Naive thymus-derived CD4-positive, alpha-beta T cell (primary cell): ENCODE measurements at regions of chr1 and their contacts with region 1.

Region 1: DNA sequence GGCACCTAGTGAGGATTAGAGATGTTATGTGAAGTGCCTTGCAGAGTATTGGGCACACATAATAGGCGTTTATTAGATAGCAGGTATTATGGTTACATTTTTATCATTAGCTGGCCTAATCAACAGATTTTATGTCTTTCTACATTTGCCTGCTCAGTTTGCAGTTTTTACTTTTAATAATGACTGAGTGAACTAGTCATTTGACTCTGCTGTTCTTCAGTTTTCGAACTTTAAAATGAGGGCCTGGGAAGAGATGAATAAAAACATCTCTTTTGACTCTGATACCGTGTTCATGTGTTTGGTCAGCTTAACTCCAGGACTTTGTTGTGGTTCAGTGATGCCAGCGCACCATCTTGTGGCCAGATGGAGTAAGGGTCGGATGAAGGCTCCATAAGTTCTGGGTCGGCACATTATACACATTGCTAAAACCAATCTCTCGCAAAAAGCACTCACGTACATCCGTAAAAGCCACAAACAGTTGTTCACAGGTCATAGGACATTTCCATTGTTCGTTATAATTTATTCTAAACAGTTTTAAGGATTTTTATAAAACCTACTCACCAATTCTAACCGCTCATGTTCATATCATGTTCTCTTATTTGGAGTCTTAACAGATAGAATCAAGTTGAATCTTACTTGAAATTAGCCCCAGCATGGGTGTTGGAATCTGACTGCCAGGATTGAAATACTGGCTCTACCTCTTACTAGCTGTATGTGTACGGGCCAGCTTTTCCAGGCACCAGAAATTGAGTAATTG is 78.4 kb upstream of the GPR88 start:
- DNase-seq: peak; percentile 34 to 62 (median 53)
- ATAC-seq: peak; percentile 87
- H3K4me3 ChIP-seq: no peak overlapping the region
- H3K4me3 Mint-ChIP-seq: peak overlapping the region in 8 of 10 donors; percentile 15 to 65 (median 40)
- H3K27ac ChIP-seq: no peak overlapping the region
- H3K27ac Mint-ChIP-seq: peak overlapping the region; percentile 11 to 93 (median 74)
- H3K4me1 ChIP-seq: peaks cover 18 to 22% of the 10 kb centered on the region in 2 donors
- H3K4me1 Mint-ChIP-seq: peaks cover 21 to 81% (median 59%) of the 10 kb centered on the region in 7 donors
- H3K27me3 ChIP-seq: no peaks in the 10 kb centered on the region
- H3K27me3 Mint-ChIP-seq: no peaks in the 10 kb centered on the region

Region 2: DNA sequence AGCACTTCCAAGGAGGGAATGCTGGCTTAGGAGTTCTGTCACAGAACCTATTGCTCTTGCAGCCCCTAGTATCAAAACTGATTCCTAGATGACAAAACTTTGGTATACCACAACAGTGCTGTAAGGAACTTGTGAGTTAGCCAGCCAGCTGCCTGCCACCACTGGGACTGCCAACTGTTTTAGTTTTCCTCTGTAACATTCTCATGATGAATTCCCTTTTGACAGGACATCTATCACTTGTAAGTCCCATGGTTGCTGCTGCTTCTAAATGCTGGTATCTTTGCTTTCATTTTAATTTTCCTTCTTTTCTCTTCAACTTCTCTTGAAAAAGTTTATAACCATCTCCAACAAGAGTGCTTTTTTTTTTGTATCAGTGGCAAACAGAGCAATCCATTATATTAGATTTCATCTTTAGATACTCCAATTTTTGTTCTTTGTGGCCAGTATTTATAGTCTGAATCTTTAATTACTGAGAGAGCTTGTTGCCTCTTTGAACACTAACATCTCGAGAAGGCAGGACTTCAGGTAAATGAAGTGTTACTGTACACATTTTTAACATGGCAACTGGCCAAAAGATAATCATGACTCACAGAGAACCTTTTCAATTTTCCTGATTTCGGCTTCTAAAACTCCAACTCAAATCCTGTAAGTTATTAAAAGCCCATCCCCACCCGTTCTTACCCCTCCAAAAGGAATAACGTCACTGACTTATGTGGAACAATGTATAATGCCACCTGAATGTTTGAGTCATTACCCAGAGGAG is 229.7 kb before region 1 on chr1:
- CTCF ChIA-PET with region 1: interaction called, 5 read pairs
- POLR2A ChIA-PET with region 1: interaction called, 3 read pairs
- intact Hi-C with region 1: loop called in 1 of 2 experiments (anchors 5 kb)
- DNase-seq: no peak
- ATAC-seq: no peak
- H3K4me3 ChIP-seq: no peak overlapping the region
- H3K4me3 Mint-ChIP-seq: no peak overlapping the region
- H3K27ac ChIP-seq: no peak overlapping the region
- H3K27ac Mint-ChIP-seq: no peak overlapping the region
- H3K4me1 ChIP-seq: no peaks in the 10 kb centered on the region
- H3K4me1 Mint-ChIP-seq: peaks cover 0 to 5% (median 0%) of the 10 kb centered on the region in 7 donors
- H3K27me3 ChIP-seq: no peaks in the 10 kb centered on the region
- H3K27me3 Mint-ChIP-seq: no peaks in the 10 kb centered on the region

Region 3: GRCh38 chr1:100277866-100278265 is 181.7 kb before region 1 on chr1:
- CTCF ChIA-PET with region 1: interaction called, 18 read pairs
- POLR2A ChIA-PET with region 1: no interaction called
- intact Hi-C with region 1: loop called in 1 of 2 experiments (anchors 1 kb)
- DNase-seq: peak in 6 of 9 donors; percentile 5 to 42 (median 28)
- ATAC-seq: peak; percentile 75
- H3K4me3 ChIP-seq: no peak overlapping the region
- H3K4me3 Mint-ChIP-seq: no peak overlapping the region
- H3K27ac ChIP-seq: no peak overlapping the region
- H3K27ac Mint-ChIP-seq: peak overlapping the region in 3 of 9 donors; percentile 9 to 37 (median 27)
- H3K4me1 ChIP-seq: no peaks in the 10 kb centered on the region
- H3K4me1 Mint-ChIP-seq: peaks cover 9 to 50% (median 34%) of the 10 kb centered on the region in 7 donors
- H3K27me3 ChIP-seq: no peaks in the 10 kb centered on the region
- H3K27me3 Mint-ChIP-seq: no peaks in the 10 kb centered on the region

Region 4: GRCh38 chr1:100400404-100400803 is 59.1 kb before region 1 on chr1:
- CTCF ChIA-PET with region 1: interaction called, 4 read pairs
- POLR2A ChIA-PET with region 1: interaction called, 7 read pairs
- intact Hi-C with region 1: loop called in 1 of 2 experiments (anchors 1 kb)
- DNase-seq: peak in 8 of 9 donors; percentile 23 to 89 (median 84)
- ATAC-seq: peak; percentile 87
- H3K4me3 ChIP-seq: peak overlapping the region; percentile 46
- H3K4me3 Mint-ChIP-seq: peak overlapping the region; percentile 69 to 89 (median 81)
- H3K27ac ChIP-seq: peak overlapping the region; percentile 72
- H3K27ac Mint-ChIP-seq: peak overlapping the region; percentile 83 to 98 (median 96)
- H3K4me1 ChIP-seq: peaks cover 77 to 87% of the 10 kb centered on the region in 2 donors
- H3K4me1 Mint-ChIP-seq: peaks cover 59 to 98% (median 86%) of the 10 kb centered on the region in 7 donors
- H3K27me3 ChIP-seq: no peaks in the 10 kb centered on the region
- H3K27me3 Mint-ChIP-seq: no peaks in the 10 kb centered on the region

Region 5: GRCh38 chr1:100543640-100544039 is 84.1 kb after region 1 on chr1:
- CTCF ChIA-PET with region 1: no interaction called
- POLR2A ChIA-PET with region 1: no interaction called
- intact Hi-C with region 1: loop called in 1 of 2 experiments (anchors 5 kb)
- DNase-seq: peak in 5 of 9 donors; percentile 17 to 39 (median 25)
- ATAC-seq: peak; percentile 76
- H3K4me3 ChIP-seq: no peak overlapping the region
- H3K4me3 Mint-ChIP-seq: no peak overlapping the region
- H3K27ac ChIP-seq: no peak overlapping the region
- H3K27ac Mint-ChIP-seq: no peak overlapping the region
- H3K4me1 ChIP-seq: peaks cover 4% of the 10 kb centered on the region in 2 donors
- H3K4me1 Mint-ChIP-seq: peaks cover 0 to 12% (median 7%) of the 10 kb centered on the region in 7 donors
- H3K27me3 ChIP-seq: peaks cover 4 to 7% of the 10 kb centered on the region in 2 donors
- H3K27me3 Mint-ChIP-seq: peaks cover 23 to 54% (median 30%) of the 10 kb centered on the region in 5 donors

Region 6: GRCh38 chr1:100613817-100614559 is 154.5 kb after region 1 on chr1:
- CTCF ChIA-PET with region 1: no interaction called
- POLR2A ChIA-PET with region 1: no interaction called
- intact Hi-C with region 1: no loop called
- DNase-seq: peak in 5 of 9 donors; percentile 10 to 42 (median 21)
- ATAC-seq: peak; percentile 56
- H3K4me3 ChIP-seq: peak overlapping the region; percentile 2
- H3K4me3 Mint-ChIP-seq: peak overlapping the region in 4 of 10 donors; percentile 24 to 68 (median 46)
- H3K27ac ChIP-seq: no peak overlapping the region
- H3K27ac Mint-ChIP-seq: peak overlapping the region in 1 of 9 donors; percentile 63
- H3K4me1 ChIP-seq: peaks cover 4 to 7% of the 10 kb centered on the region in 2 donors
- H3K4me1 Mint-ChIP-seq: peaks cover 9 to 23% (median 21%) of the 10 kb centered on the region in 7 donors
- H3K27me3 ChIP-seq: no peaks in the 10 kb centered on the region
- H3K27me3 Mint-ChIP-seq: peaks cover 0 to 17% (median 0%) of the 10 kb centered on the region in 5 donors